Posterior vena cava (tissue), 2 donors: ENCODE measurements at regions of chrX and their contacts with region 1.

Region 1: GRCh38 chrX:130419263-130419662 is 17.5 kb downstream of the RBMX2 start:
- DNase-seq: no peak

Region 2: GRCh38 chrX:132114615-132115014 is 1695.4 kb after region 1 on chrX:
- intact Hi-C with region 1: loop called in 1 of 2 experiments (anchors 5 kb)
- DNase-seq: no peak